Activated CD4-positive, alpha-beta memory T cell treated with anti-CD3 and anti-CD28 coated beads for 36 hours (primary cell): ENCODE measurements at regions of chr13 and their contacts with region 1.

Region 1: DNA sequence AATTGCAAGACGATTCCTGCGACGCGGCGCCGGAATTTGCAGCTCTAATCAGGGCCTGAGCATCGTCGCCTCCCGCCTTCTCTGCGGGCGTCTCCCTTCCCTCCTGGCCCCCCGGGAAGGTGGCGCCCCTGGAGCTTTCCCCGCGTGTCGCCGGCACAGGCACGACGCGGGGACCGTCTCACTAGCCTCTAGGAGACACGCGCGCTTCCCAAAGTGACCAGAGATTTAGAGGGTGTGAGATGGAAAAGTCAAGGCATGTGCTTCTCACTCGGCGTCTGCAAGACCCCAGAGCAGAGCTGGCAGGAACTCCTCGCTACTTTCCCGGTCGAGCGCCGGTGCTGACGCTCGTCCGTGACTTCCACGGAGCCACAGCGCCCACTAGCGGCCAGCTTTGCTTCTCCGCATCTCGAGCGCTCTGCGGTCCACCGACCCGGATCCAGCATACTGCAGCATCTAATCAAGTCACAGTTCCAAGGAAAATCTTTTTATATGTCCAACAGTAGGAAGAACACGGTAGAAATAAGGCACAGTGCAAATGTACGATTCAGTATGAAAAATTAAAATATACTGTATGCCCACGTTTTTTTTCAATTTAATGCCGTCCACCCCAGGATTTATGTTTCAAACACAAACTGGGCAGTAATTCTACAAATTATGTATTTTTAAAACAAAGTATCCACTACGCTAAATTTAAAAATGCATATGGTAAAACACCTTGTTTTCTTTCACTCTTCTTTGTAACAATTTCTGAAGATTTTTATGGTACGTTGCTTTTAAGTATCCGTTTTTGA is 977 bp upstream of the EFNB2 start:
- DNase-seq: peak; percentile 87
- H3K4me3 Mint-ChIP-seq: peak overlapping the region; percentile 84
- H3K27ac Mint-ChIP-seq: peak overlapping the region; percentile 73
- H3K4me1 Mint-ChIP-seq: peaks cover 16% of the 10 kb centered on the region
- H3K27me3 Mint-ChIP-seq: peaks cover 26% of the 10 kb centered on the region

Region 2: DNA sequence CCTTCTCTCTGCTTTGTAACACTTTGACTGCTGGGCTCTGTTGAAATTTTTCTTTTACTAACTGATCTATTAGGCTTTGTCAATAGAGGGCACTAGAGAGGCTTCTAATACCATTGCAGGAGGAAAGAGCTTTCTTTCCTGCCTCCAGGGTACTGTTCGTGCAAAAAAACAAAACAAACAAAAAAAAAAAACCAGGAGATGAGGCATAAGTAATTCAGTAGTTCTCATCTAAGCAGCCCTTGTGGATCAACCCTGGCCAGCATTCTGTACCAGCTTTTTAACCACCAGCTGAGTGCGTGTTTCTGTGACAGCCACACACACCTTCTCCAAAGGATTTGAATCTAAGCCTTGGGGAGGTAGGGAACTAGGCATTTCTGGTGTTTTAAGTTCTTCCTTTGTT is 1762.7 kb before region 1 on chr13:
- CTCF ChIA-PET with region 1: no interaction called
- POLR2A ChIA-PET with region 1: no interaction called
- intact Hi-C with region 1: loop called (anchors 10 kb)
- DNase-seq: no peak
- H3K4me3 Mint-ChIP-seq: no peak overlapping the region
- H3K27ac Mint-ChIP-seq: no peak overlapping the region
- H3K4me1 Mint-ChIP-seq: no peaks in the 10 kb centered on the region
- H3K27me3 Mint-ChIP-seq: no peaks in the 10 kb centered on the region

Region 3: GRCh38 chr13:106083620-106084350 is 452.7 kb before region 1 on chr13:
- CTCF ChIA-PET with region 1: no interaction called
- POLR2A ChIA-PET with region 1: no interaction called
- intact Hi-C with region 1: loop called (anchors 2 kb)
- DNase-seq: peak; percentile 11
- H3K4me3 Mint-ChIP-seq: no peak overlapping the region
- H3K27ac Mint-ChIP-seq: no peak overlapping the region
- H3K4me1 Mint-ChIP-seq: no peaks in the 10 kb centered on the region
- H3K27me3 Mint-ChIP-seq: no peaks in the 10 kb centered on the region

Region 4: DNA sequence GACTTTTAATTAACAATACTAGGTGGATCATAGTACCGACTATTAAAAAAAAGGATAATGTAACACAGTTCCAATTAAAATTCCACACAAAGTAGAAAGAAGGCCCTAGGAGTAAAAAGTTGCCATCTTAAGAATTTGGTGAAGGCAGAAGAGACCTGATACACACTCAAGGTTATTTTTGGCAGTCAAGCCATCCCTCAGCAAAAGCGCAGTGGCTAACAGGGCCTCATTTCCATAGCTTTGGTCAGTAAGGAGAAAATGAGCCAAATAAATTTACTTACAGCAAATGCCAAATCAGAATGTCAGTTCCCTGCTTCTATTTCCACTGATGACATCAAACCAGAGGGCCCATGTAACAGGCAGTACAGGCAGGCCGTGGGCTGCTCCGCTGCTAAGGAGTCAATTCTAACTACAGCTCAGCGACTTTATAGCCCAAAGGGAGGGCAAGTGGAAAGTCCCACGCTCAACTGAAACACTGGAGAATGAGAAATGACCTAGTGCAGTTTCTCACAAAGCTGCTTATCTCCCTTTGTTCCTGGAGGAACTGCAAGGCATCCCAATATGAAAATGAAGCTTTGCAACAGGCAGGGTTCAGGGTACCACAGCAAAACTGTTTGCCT is 25.2 kb after region 1 on chr13:
- CTCF ChIA-PET with region 1: interaction called, 57 read pairs
- POLR2A ChIA-PET with region 1: interaction called, 13 read pairs
- intact Hi-C with region 1: loop called (anchors 2 kb)
- DNase-seq: peak; percentile 82
- H3K4me3 Mint-ChIP-seq: peak overlapping the region; percentile 16
- H3K27ac Mint-ChIP-seq: peak overlapping the region; percentile 77
- H3K4me1 Mint-ChIP-seq: peaks cover 67% of the 10 kb centered on the region
- H3K27me3 Mint-ChIP-seq: no peaks in the 10 kb centered on the region

Region 5: DNA sequence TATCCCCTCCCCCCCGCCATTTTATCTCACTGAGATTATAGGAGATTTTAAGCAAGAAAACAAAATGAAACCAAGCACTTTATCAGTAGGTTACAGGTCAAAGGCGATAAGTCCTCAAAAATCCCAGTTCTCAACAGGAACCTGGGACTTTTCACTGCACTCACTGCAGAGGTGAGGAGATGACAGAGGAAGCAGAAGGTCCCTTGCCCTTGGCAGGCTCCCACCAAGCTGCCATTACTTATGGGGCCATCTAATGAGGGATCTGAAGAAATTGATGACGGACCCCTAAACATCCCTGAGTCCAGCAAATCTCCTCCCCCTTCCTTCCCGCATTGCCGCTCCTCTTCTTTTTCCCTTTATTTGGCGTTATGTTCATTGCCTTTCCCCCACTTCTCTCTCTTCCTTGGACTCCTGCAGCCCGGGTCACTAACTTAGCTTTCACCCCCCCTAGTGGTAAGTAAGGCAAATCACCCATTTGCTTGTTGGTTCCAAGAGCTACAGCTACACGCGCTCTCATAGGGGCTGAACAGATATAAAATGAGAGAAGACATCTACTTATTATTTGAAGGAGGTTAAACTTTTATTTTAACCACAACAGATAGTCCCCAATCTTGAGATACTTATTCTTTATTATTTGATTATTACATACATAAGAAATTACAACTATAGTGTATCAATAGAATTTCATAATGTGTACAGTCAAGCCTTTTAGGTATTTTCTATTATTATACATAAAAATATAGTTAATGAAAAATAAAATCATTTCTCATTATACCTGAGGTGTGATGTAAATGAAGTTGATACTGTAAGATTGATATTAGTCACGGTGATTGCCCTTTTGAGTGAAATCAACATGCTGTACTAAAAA is 83.5 kb after region 1 on chr13:
- CTCF ChIA-PET with region 1: interaction called, 9 read pairs
- POLR2A ChIA-PET with region 1: no interaction called
- intact Hi-C with region 1: loop called (anchors 5 kb)
- DNase-seq: peak; percentile 28
- H3K4me3 Mint-ChIP-seq: no peak overlapping the region
- H3K27ac Mint-ChIP-seq: no peak overlapping the region
- H3K4me1 Mint-ChIP-seq: peaks cover 2% of the 10 kb centered on the region
- H3K27me3 Mint-ChIP-seq: peaks cover 12% of the 10 kb centered on the region

Region 6: GRCh38 chr13:106874323-106874722 is 337.9 kb after region 1 on chr13:
- CTCF ChIA-PET with region 1: no interaction called
- POLR2A ChIA-PET with region 1: no interaction called
- intact Hi-C with region 1: no loop called
- DNase-seq: no peak
- H3K4me3 Mint-ChIP-seq: no peak overlapping the region
- H3K27ac Mint-ChIP-seq: no peak overlapping the region
- H3K4me1 Mint-ChIP-seq: no peaks in the 10 kb centered on the region
- H3K27me3 Mint-ChIP-seq: peaks cover 1% of the 10 kb centered on the region